AG04450 (cell line): ENCODE measurements at regions of chr3 and their contacts with region 1.

Region 1: DNA sequence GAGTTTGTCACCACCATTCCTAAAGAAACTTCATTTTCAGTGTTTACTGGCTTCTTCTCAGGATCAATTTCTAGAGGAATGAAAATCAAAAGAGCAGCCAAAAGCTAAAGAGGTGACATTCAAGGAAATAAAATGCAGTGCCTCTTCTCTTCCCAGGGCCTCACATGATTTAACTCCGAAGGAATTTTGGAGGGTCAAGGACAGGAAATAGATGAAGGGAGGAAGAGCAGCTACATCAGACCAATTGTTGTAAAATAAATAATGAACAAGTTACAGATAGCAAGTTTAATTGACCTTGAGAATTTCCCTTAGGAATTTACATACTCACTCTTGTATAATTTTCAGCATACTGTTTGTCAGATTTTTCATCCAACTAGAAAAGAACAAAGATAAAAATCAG is 78.1 kb downstream of the LRRFIP2 start:
- DNase-seq: peak; percentile 8
- H3K4me3 ChIP-seq: no peak overlapping the region
- H3K27ac ChIP-seq: no peak overlapping the region
- H3K27me3 ChIP-seq: no peaks in the 10 kb centered on the region
- CTCF ChIP-seq: no peak

Region 2: GRCh38 chr3:36904641-36905040 is 191.6 kb before region 1 on chr3:
- CTCF ChIA-PET with region 1: no interaction called
- POLR2A ChIA-PET with region 1: no interaction called
- DNase-seq: no peak
- H3K4me3 ChIP-seq: no peak overlapping the region
- H3K27ac ChIP-seq: no peak overlapping the region
- H3K27me3 ChIP-seq: no peaks in the 10 kb centered on the region
- CTCF ChIP-seq: peak; percentile 65

Region 3: GRCh38 chr3:37064747-37065146 is 31.5 kb before region 1 on chr3:
- CTCF ChIA-PET with region 1: no interaction called
- POLR2A ChIA-PET with region 1: interaction called, 11 read pairs
- DNase-seq: no peak
- H3K4me3 ChIP-seq: no peak overlapping the region
- H3K27ac ChIP-seq: no peak overlapping the region
- H3K27me3 ChIP-seq: no peaks in the 10 kb centered on the region
- CTCF ChIP-seq: no peak